HCT116 (cell line): ENCODE measurements at regions of chr1 and their contacts with region 1.

Region 1: DNA sequence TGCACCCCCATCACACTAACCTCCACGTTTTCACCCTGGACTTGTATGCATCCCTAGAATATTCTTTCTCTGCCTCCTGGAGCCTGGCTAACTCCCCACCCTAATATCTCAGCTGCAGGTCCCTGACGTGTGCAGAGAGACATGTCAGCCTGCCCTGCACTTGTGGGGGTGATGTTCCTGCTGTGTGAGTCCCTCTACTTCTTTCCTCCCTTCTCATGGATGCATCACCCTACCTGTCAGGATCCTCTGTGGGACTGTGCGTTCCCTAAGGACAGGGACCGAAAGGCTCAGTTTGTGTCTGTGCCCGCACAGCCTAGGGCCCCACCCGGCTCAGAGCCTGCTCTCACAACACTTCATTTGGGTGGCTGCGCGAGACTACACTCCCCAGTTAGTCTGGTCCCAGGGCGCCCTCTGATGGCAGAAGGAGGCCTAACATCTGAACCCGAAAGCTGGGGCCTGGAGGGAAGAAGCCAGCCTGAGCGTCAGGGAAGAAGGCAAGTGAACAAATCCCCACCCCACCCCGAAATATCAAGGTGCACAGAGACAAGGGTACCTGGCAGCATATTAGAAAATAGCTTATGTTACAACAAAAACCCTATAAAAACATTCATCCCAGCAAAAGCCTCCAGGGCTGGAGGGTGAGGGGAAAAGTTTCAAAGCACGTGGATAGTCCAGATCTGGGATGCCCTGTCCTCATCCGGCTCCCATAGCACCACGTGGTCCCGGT is 3.7 kb downstream of the CD52 start:
- DNase-seq: peak; percentile 54
- ATAC-seq: peak; percentile 97
- H3K4me3 ChIP-seq: no peak overlapping the region
- H3K27ac ChIP-seq: no peak overlapping the region
- H3K4me1 ChIP-seq: peaks cover 5 to 16% of the 10 kb centered on the region in 2 experiments; a peak in 3 of 4 replicates
- H3K27me3 ChIP-seq: no peaks in the 10 kb centered on the region
- CTCF ChIP-seq: peak; percentile 83 to 93 (median 92)
- POLR2A ChIP-seq: no peak
- RAD21 ChIP-seq: peak; percentile 97

Region 2: DNA sequence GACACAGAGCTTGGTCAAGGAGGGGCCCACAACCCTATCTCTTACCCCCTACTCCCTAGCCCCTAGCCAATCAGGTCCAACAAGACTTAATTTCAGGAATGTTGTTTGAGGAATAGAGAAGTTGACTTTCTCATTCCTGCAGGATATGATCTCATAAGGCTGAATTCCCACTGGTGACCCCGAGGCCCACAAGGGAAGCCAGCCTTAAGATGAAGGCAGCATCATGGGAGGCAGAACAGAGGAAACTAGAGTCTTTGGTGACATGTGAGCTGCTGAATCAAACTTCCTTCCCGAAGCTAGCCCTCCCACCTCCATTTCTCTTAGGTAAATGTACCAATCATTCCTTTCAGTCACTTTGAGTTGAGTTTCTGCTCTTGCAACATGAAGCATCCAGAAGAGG is 219.0 kb before region 1 on chr1:
- CTCF ChIA-PET with region 1: no interaction called
- POLR2A ChIA-PET with region 1: no interaction called
- RAD21 ChIA-PET with region 1: no interaction called
- intact Hi-C with region 1: loop called (anchors 2 kb)
- DNase-seq: no peak
- ATAC-seq: no peak
- H3K4me3 ChIP-seq: no peak overlapping the region
- H3K27ac ChIP-seq: no peak overlapping the region
- H3K4me1 ChIP-seq: 0 out of 4 replicates have a peak, but pooled peaks cover 0 to 3% of the 10 kb centered on the region in 2 experiments
- H3K27me3 ChIP-seq: no peaks in the 10 kb centered on the region
- CTCF ChIP-seq: no peak
- POLR2A ChIP-seq: no peak
- RAD21 ChIP-seq: no peak

Region 3: DNA sequence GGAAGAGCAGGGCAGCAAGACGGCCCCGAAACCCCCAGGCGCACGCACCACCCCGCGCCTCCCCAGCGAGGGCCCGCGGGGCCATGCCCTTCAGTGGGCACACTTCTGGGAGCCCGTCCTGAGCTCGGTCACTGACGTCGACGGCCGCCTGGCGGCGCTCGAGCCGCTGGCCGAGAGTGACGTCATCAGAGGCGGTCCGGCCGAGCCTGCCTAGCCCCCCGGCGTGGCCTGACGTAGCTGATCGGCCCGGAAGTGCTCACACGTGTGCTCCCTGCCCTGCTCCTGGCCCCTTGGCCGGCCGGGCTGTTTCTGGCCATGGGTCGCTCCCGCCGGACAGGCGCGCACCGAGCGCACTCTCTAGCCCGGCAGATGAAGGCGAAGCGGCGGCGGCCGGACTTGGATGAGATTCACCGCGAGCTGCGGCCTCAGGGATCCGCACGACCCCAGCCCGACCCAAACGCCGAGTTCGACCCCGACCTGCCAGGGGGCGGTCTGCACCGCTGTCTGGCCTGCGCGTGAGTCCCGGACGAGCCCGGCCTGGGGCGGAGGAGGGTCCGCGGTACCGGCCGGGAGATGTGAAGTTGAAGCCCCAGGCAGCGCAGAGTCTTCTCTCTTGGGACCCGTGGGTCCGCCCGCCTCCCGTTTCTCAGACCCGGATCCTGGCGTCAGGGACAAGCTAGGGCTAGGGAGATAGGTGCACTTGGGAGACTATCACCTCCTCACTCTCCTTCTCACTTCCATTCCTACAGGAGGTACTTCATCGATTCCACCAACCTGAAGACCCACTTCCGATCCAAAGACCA is 151.6 kb before region 1 on chr1 and contains the start of gene ZNF593:
- CTCF ChIA-PET with region 1: interaction called, 5 read pairs
- POLR2A ChIA-PET with region 1: no interaction called
- RAD21 ChIA-PET with region 1: no interaction called
- intact Hi-C with region 1: loop called (anchors 5 kb)
- DNase-seq: peak; percentile 86
- ATAC-seq: peak; percentile 92
- H3K4me3 ChIP-seq: peak within 1 kb of the TSS; percentile 89 to 96
- H3K27ac ChIP-seq: peak within 1 kb of the TSS; percentile 74
- H3K4me1 ChIP-seq: peaks cover 4 to 22% of the 10 kb centered on the region in 2 experiments; a peak in 3 of 4 replicates
- H3K27me3 ChIP-seq: no peaks in the 10 kb centered on the region
- CTCF ChIP-seq: peak; percentile 80 to 84 (median 81)
- POLR2A ChIP-seq: no peak
- RAD21 ChIP-seq: peak; percentile 59
- total RNA-seq, gene ZNF593: 62.4 TPM

Region 4: GRCh38 chr1:26279456-26280332 is 41.8 kb before region 1 on chr1 and contains the start of gene SH3BGRL3:
- CTCF ChIA-PET with region 1: interaction called, 47 read pairs
- POLR2A ChIA-PET with region 1: interaction called, 4 read pairs
- RAD21 ChIA-PET with region 1: interaction called, 4 read pairs
- intact Hi-C with region 1: loop called (anchors 1 kb)
- DNase-seq: peak; percentile 57
- ATAC-seq: peak; percentile 79
- H3K4me3 ChIP-seq: peak within 1 kb of the TSS; percentile 74 to 76
- H3K27ac ChIP-seq: peak within 1 kb of the TSS; percentile 81
- H3K4me1 ChIP-seq: peaks cover 41 to 95% of the 10 kb centered on the region in 2 experiments
- H3K27me3 ChIP-seq: no peaks in the 10 kb centered on the region
- CTCF ChIP-seq: peak in 2 of 3 experiments; percentile 70 to 77; a peak in 4 of 6 replicates
- POLR2A ChIP-seq: peak; percentile 68
- RAD21 ChIP-seq: no peak
- total RNA-seq, gene SH3BGRL3: 112 TPM

Region 5: GRCh38 chr1:26336477-26337205 is 15.2 kb after region 1 on chr1:
- CTCF ChIA-PET with region 1: interaction called, 12 read pairs
- POLR2A ChIA-PET with region 1: no interaction called
- RAD21 ChIA-PET with region 1: no interaction called
- intact Hi-C with region 1: no loop called
- DNase-seq: peak; percentile 75
- ATAC-seq: peak; percentile 94
- H3K4me3 ChIP-seq: peak overlapping the region; percentile 62 to 86
- H3K27ac ChIP-seq: peak overlapping the region; percentile 54; the same call in 1 of the 2 replicates
- H3K4me1 ChIP-seq: peaks cover 11 to 25% of the 10 kb centered on the region in 2 experiments
- H3K27me3 ChIP-seq: no peaks in the 10 kb centered on the region
- CTCF ChIP-seq: no peak
- POLR2A ChIP-seq: no peak
- RAD21 ChIP-seq: no peak